Lower leg skin (tissue), 4 donors: ENCODE measurements at regions of chr6 and their contacts with region 1.

Region 1: GRCh38 chr6:86856937-86857563 is 80.3 kb upstream of the HTR1E start:
- DNase-seq: no peak
- H3K4me3 ChIP-seq: no peak overlapping the region
- CTCF ChIP-seq: no peak
- POLR2A ChIP-seq: no peak

Region 2: DNA sequence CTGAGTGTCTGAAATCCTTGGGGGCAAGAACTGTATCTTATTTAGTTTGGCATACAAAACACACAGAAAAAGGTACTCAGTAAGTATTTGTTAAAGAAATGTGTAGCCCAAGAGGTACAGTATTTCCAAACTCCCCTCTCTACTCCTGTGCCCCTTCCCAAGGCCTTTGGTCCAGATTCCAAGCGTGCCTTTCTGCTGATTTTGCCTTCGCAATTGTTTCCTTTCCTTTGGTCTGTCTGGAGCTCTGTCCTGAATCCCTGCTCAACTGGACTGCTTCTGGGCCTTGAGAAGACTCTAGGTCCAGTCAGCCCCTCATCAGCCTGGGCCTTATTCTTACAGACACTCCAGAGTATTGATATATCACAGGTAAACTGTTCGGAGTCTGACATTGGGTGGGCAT is 1092.2 kb before region 1 on chr6:
- intact Hi-C with region 1: loop called (anchors 10 kb)
- DNase-seq: no peak
- H3K4me3 ChIP-seq: no peak overlapping the region
- CTCF ChIP-seq: no peak
- POLR2A ChIP-seq: no peak

Region 3: DNA sequence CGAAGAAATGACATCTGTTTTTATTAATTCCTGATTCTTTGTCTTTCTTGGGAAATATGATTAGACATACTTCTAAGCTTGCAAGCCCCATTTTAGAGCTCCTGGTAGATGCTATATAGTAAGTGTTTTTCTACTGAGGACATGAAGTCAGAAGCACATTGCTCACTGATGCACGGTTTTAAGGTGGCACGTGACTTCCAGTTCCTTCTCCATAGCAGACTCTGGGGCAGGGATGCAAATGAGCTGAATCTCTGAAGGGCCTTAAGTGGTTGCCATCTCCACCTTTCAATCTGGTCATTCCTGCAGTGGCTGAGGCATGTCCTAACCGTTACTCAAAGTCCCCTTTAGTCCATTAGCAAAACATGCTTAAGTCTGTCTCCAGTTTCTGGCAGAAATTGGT is 341.0 kb before region 1 on chr6:
- intact Hi-C with region 1: no loop called
- DNase-seq: no peak
- H3K4me3 ChIP-seq: no peak overlapping the region
- CTCF ChIP-seq: no peak
- POLR2A ChIP-seq: no peak